ENCODE measurements at regions of chr14 and their contacts with region 1.

Region 1: GRCh38 chr14:69090187-69090789 is 62.6 kb downstream of the DCAF5 start:
- DNase-seq: peak; percentile 4
- H3K4me3 ChIP-seq: no peak overlapping the region
- H3K27ac ChIP-seq: peak overlapping the region; percentile 79 to 90 (median 88)
- H3K4me1 ChIP-seq: peaks cover 21 to 82% (median 77%) of the 10 kb centered on the region in 4 donors
- H3K27me3 ChIP-seq: no peaks in the 10 kb centered on the region
- CTCF ChIP-seq: peak; percentile 55 to 73 (median 72)
- EP300 ChIP-seq: no peak
- POLR2A ChIP-seq: no peak

Region 2: DNA sequence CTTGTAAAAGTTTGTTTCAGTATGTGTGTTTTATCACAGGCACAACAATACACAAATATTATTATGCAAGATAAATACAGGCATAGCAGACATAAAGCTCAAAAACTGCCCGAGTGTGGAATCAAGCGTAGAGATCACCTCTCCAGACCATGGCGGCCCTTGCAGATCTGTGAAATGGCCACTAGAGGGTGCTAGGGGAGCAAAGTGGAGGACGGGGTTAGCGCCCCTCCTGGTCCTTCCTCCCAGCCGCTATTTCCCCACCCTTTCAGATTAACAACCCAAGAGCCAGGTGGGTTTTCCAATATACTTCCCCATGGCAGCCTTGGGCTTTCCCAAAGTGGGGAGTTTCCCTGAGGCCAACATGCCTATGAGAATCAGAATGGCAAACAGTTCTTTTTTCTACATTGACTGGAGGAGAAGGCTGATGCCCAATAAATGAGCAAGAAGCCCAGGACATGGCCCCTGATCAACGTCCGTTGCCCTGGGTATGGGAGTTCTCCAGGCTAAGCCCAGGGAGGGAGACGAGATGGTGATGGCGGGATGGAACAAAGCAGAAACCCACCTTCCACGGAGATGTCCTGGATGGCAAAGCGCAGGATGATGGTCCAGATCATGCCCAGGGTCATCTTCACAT is 178.6 kb before region 1 on chr14:
- intact Hi-C with region 1: loop called (anchors 5 kb)
- DNase-seq: no peak
- H3K4me3 ChIP-seq: no peak overlapping the region
- H3K27ac ChIP-seq: peak overlapping the region; percentile 90 to 98 (median 97)
- H3K4me1 ChIP-seq: peaks cover 10 to 96% (median 92%) of the 10 kb centered on the region in 4 donors
- H3K27me3 ChIP-seq: no peaks in the 10 kb centered on the region
- CTCF ChIP-seq: peak in 2 of 3 experiments; percentile 98 to 99
- EP300 ChIP-seq: no peak
- POLR2A ChIP-seq: no peak